B cell (primary cell): ENCODE measurements at regions of chrX and their contacts with region 1.

Region 1: GRCh38 chrX:9942086-9942485 is 25.1 kb upstream of the CLDN34 start:
- DNase-seq: peak; percentile 61
- ATAC-seq: peak; percentile 87
- H3K4me3 ChIP-seq: peak overlapping the region in 1 of 5 experiments; percentile 15
- H3K4me3 Mint-ChIP-seq: peak overlapping the region; percentile 81
- H3K27ac ChIP-seq: no peak overlapping the region
- H3K27ac Mint-ChIP-seq: peak overlapping the region; percentile 73
- H3K4me1 ChIP-seq: peaks cover 12 to 18% of the 10 kb centered on the region in 2 donors
- H3K4me1 Mint-ChIP-seq: peaks cover 22% of the 10 kb centered on the region
- H3K27me3 ChIP-seq: peaks cover 0 to 8% (median 0%) of the 10 kb centered on the region in 4 experiments
- H3K27me3 Mint-ChIP-seq: no peaks in the 10 kb centered on the region
- CTCF ChIP-seq: no peak

Region 2: GRCh38 chrX:9885150-9885549 is 56.9 kb before region 1 on chrX:
- CTCF ChIA-PET with region 1: no interaction called
- POLR2A ChIA-PET with region 1: no interaction called
- intact Hi-C with region 1: loop called (anchors 10 kb)
- DNase-seq: peak; percentile 67
- ATAC-seq: peak; percentile 72
- H3K4me3 ChIP-seq: no peak overlapping the region
- H3K4me3 Mint-ChIP-seq: no peak overlapping the region
- H3K27ac ChIP-seq: no peak overlapping the region
- H3K27ac Mint-ChIP-seq: no peak overlapping the region
- H3K4me1 ChIP-seq: peaks cover 0 to 4% of the 10 kb centered on the region in 2 donors
- H3K4me1 Mint-ChIP-seq: peaks cover 2% of the 10 kb centered on the region
- H3K27me3 ChIP-seq: no peaks in the 10 kb centered on the region
- H3K27me3 Mint-ChIP-seq: no peaks in the 10 kb centered on the region
- CTCF ChIP-seq: peak; percentile 56

Region 3: DNA sequence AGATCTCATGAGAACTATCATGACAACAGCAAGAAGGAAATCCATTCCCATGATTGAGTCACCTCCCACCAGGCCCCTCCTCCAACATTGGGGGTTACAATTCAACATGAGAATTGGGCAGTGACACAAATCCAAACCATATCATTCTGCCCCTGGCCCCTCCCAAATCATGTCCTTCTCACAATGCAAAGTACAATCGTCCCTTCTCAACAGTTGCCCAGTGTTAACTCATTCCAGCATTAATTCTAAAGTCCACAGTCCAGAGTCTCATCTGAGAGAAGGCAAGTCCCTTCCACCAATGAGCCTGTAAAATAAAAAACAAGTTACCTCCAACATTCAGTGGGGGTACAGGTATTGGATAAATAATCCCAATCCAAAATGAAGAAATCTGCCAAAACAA is 10.2 kb after region 1 on chrX:
- CTCF ChIA-PET with region 1: no interaction called
- POLR2A ChIA-PET with region 1: interaction called, 17 read pairs
- intact Hi-C with region 1: no loop called
- DNase-seq: no peak
- ATAC-seq: no peak
- H3K4me3 ChIP-seq: no peak overlapping the region
- H3K4me3 Mint-ChIP-seq: no peak overlapping the region
- H3K27ac ChIP-seq: no peak overlapping the region
- H3K27ac Mint-ChIP-seq: no peak overlapping the region
- H3K4me1 ChIP-seq: no peaks in the 10 kb centered on the region
- H3K4me1 Mint-ChIP-seq: no peaks in the 10 kb centered on the region
- H3K27me3 ChIP-seq: no peaks in the 10 kb centered on the region
- H3K27me3 Mint-ChIP-seq: no peaks in the 10 kb centered on the region
- CTCF ChIP-seq: no peak

Region 4: GRCh38 chrX:9980927-9981326 is 38.8 kb after region 1 on chrX:
- CTCF ChIA-PET with region 1: interaction called, 3 read pairs
- POLR2A ChIA-PET with region 1: no interaction called
- intact Hi-C with region 1: loop called (anchors 2 kb)
- DNase-seq: no peak
- ATAC-seq: no peak
- H3K4me3 ChIP-seq: peak overlapping the region in 1 of 5 experiments; percentile 16
- H3K4me3 Mint-ChIP-seq: peak overlapping the region; percentile 64
- H3K27ac ChIP-seq: peak overlapping the region; percentile 70 to 82
- H3K27ac Mint-ChIP-seq: peak overlapping the region; percentile 94
- H3K4me1 ChIP-seq: peaks cover 26 to 34% of the 10 kb centered on the region in 2 donors
- H3K4me1 Mint-ChIP-seq: peaks cover 34% of the 10 kb centered on the region
- H3K27me3 ChIP-seq: no peaks in the 10 kb centered on the region
- H3K27me3 Mint-ChIP-seq: no peaks in the 10 kb centered on the region
- CTCF ChIP-seq: no peak